ENCODE measurements at regions of chr1 and their contacts with region 1.

Region 1: GRCh38 chr1:215137985-215138384 is 55.4 kb downstream of the KCNK2 start:
- DNase-seq: no peak
- H3K4me3 Mint-ChIP-seq: no peak overlapping the region
- H3K27ac Mint-ChIP-seq: no peak overlapping the region
- H3K4me1 Mint-ChIP-seq: peaks cover 22% of the 10 kb centered on the region
- H3K27me3 Mint-ChIP-seq: no peaks in the 10 kb centered on the region
- CTCF ChIP-seq: no peak

Region 2: GRCh38 chr1:215081661-215082531 is 56.1 kb before region 1 on chr1:
- CTCF ChIA-PET with region 1: no interaction called
- intact Hi-C with region 1: loop called (anchors 2 kb)
- DNase-seq: no peak
- H3K4me3 Mint-ChIP-seq: peak overlapping the region; percentile 82
- H3K27ac Mint-ChIP-seq: peak overlapping the region; percentile 70
- H3K4me1 Mint-ChIP-seq: peaks cover 5% of the 10 kb centered on the region
- H3K27me3 Mint-ChIP-seq: peaks cover 32% of the 10 kb centered on the region
- CTCF ChIP-seq: no peak

Region 3: GRCh38 chr1:215156232-215156631 is 18.2 kb after region 1 on chr1:
- CTCF ChIA-PET with region 1: no interaction called
- intact Hi-C with region 1: no loop called
- DNase-seq: no peak
- H3K4me3 Mint-ChIP-seq: no peak overlapping the region
- H3K27ac Mint-ChIP-seq: no peak overlapping the region
- H3K4me1 Mint-ChIP-seq: no peaks in the 10 kb centered on the region
- H3K27me3 Mint-ChIP-seq: no peaks in the 10 kb centered on the region
- CTCF ChIP-seq: no peak